Dendritic cell treated with granulocyte-macrophage colony-stimulating factor and Interleukin-4, amounts not matched to agents 40 ng/mL and 50 ng/mL, for 4 days (primary cell): ENCODE measurements at regions of chr7 and their contacts with region 1.

Region 1: GRCh38 chr7:95684037-95684436 is 87.7 kb upstream of the PDK4 start:
- H3K4me3 Mint-ChIP-seq: no peak overlapping the region
- H3K27ac Mint-ChIP-seq: no peak overlapping the region
- H3K4me1 Mint-ChIP-seq: peaks cover 13% of the 10 kb centered on the region
- H3K27me3 Mint-ChIP-seq: no peaks in the 10 kb centered on the region

Region 2: GRCh38 chr7:95491634-95492320 is 192.3 kb before region 1 on chr7:
- intact Hi-C with region 1: no loop called
- H3K4me3 Mint-ChIP-seq: no peak overlapping the region
- H3K27ac Mint-ChIP-seq: no peak overlapping the region
- H3K4me1 Mint-ChIP-seq: no peaks in the 10 kb centered on the region
- H3K27me3 Mint-ChIP-seq: peaks cover 1% of the 10 kb centered on the region

Region 3: GRCh38 chr7:95527033-95527775 is 156.8 kb before region 1 on chr7:
- intact Hi-C with region 1: loop called (anchors 1 kb)
- H3K4me3 Mint-ChIP-seq: no peak overlapping the region
- H3K27ac Mint-ChIP-seq: no peak overlapping the region
- H3K4me1 Mint-ChIP-seq: peaks cover 5% of the 10 kb centered on the region
- H3K27me3 Mint-ChIP-seq: no peaks in the 10 kb centered on the region

Region 4: DNA sequence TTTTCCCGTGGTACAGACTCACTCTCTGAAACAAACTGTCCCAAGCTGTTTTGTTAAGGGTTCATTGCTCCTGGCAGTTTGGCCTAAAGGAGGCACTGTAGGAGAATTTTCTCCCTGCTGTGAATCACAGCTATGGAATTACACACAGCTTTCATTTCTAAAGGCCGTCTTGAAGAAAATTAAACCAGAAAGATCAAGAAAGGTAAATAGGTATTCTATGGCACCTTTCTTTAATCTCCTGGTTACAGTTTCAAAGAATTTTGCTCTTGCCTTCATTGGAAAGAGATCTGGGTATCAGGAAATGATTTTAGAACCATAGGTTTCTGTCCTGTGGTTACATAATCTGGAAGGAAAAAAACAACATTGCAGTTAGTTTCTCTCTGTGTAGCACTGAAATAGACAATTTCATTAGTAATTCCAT is 138.9 kb before region 1 on chr7:
- intact Hi-C with region 1: loop called (anchors 1 kb)
- H3K4me3 Mint-ChIP-seq: no peak overlapping the region
- H3K27ac Mint-ChIP-seq: no peak overlapping the region
- H3K4me1 Mint-ChIP-seq: peaks cover 14% of the 10 kb centered on the region
- H3K27me3 Mint-ChIP-seq: peaks cover 1% of the 10 kb centered on the region

Region 5: GRCh38 chr7:95596198-95597063 is 87.6 kb before region 1 on chr7 and contains the start of gene PDK4:
- intact Hi-C with region 1: loop called (anchors 5 kb)
- H3K4me3 Mint-ChIP-seq: peak within 1 kb of the TSS; percentile 79
- H3K27ac Mint-ChIP-seq: peak within 1 kb of the TSS; percentile 77
- H3K4me1 Mint-ChIP-seq: peaks cover 20% of the 10 kb centered on the region
- H3K27me3 Mint-ChIP-seq: no peaks in the 10 kb centered on the region

Region 6: GRCh38 chr7:95628831-95629439 is 55.1 kb before region 1 on chr7:
- intact Hi-C with region 1: no loop called
- H3K4me3 Mint-ChIP-seq: no peak overlapping the region
- H3K27ac Mint-ChIP-seq: no peak overlapping the region
- H3K4me1 Mint-ChIP-seq: peaks cover 15% of the 10 kb centered on the region
- H3K27me3 Mint-ChIP-seq: no peaks in the 10 kb centered on the region

Region 7: GRCh38 chr7:95646350-95646749 is 37.7 kb before region 1 on chr7:
- intact Hi-C with region 1: no loop called
- H3K4me3 Mint-ChIP-seq: no peak overlapping the region
- H3K27ac Mint-ChIP-seq: no peak overlapping the region
- H3K4me1 Mint-ChIP-seq: no peaks in the 10 kb centered on the region
- H3K27me3 Mint-ChIP-seq: no peaks in the 10 kb centered on the region